ENCODE measurements at regions of chr9 and their contacts with region 1.

Region 1: GRCh38 chr9:94030318-94031179 is 53.7 kb upstream of the PTPDC1 start:
- DNase-seq: peak; percentile 74 to 89 (median 82)
- H3K4me3 ChIP-seq: peak overlapping the region; percentile 87
- H3K27ac ChIP-seq: peak overlapping the region; percentile 16 to 44
- H3K4me1 ChIP-seq: peaks cover 1% of the 10 kb centered on the region
- H3K27me3 ChIP-seq: no peaks in the 10 kb centered on the region
- CTCF ChIP-seq: no peak
- EP300 ChIP-seq: no peak
- POLR2A ChIP-seq: peak; percentile 62

Region 2: DNA sequence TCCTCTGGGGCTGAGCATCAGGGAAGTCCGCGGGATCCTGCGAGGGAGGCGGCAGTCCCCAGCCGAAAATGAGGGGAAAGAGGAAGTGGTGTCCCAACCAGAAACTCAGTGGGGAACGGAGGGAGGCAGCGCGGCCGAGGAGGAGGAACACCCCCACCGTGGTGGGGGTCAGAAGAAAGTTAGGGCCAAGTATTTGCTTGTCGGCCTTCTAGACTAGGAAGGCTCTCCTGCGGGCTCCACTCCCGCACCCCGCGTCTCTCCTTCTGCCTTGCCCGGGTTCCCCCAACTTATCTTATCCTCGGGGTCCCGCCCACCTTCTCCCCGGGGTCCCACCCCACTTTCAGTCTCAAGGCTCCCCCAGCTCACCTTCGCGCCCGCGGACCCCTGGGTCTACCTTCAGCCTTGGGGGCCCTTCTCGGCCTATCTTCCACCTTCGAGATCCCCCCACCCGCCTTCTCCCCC is 454.7 kb before region 1 on chr9:
- intact Hi-C with region 1: loop called in 1 of 4 experiments (anchors 10 kb)
- DNase-seq: peak; percentile 72 to 81 (median 80)
- H3K4me3 ChIP-seq: peak overlapping the region; percentile 90
- H3K27ac ChIP-seq: peak overlapping the region; percentile 88 to 92
- H3K4me1 ChIP-seq: peaks cover 4% of the 10 kb centered on the region
- H3K27me3 ChIP-seq: no peaks in the 10 kb centered on the region
- CTCF ChIP-seq: no peak
- EP300 ChIP-seq: no peak
- POLR2A ChIP-seq: no peak

Region 3: GRCh38 chr9:94166237-94166963 is 135.9 kb after region 1 on chr9:
- intact Hi-C with region 1: loop called in 1 of 4 experiments (anchors 5 kb)
- DNase-seq: peak; percentile 98 to 99 (median 98)
- H3K4me3 ChIP-seq: peak overlapping the region; percentile 99
- H3K27ac ChIP-seq: peak overlapping the region; percentile 100
- H3K4me1 ChIP-seq: peaks cover 6% of the 10 kb centered on the region
- H3K27me3 ChIP-seq: no peaks in the 10 kb centered on the region
- CTCF ChIP-seq: peak in 2 of 3 donors; percentile 50 to 81
- EP300 ChIP-seq: peak; percentile 75
- POLR2A ChIP-seq: peak; percentile 99